ENCODE measurements at regions of chr18 and their contacts with region 1.

Region 1: DNA sequence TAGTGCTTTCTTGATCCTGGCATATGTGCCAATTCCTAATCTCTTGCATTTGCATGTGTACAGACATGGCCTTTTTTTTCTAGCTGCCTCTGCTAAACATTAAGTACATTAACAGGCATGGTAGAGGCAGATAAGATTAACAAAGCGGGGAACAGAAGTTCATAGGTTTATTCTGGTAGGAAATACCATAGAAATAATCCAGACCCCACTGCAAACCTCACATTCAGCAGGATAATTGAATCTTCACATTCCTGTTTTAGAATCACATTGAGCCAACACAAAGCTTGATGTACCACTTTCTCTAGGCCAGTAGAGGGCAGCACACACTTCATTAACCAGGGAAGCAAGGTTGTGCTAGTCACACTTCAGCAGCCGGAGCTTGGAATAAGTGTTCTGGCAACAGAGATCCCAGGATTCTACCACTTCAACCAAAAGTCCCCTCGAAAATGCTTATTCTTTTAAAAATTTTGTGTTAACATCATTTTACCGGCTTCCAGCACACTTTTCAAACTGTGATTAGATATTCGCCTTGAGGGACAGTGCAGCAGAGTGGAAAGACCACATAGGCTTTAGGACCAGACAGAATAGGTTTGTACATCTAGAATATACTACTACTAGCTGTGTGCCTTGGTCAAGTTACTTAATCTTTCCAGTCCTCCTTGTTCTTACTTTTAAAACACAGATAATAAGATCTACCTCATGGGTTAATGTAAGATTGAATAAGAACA is 420.2 kb upstream of the CHST9 start:
- DNase-seq: no peak
- ATAC-seq: peak; percentile 90
- H3K4me3 ChIP-seq: no peak overlapping the region
- H3K27ac ChIP-seq: no peak overlapping the region
- H3K4me1 ChIP-seq: no peaks in the 10 kb centered on the region
- H3K27me3 ChIP-seq: no peaks in the 10 kb centered on the region
- CTCF ChIP-seq: peak; percentile 77 to 86 (median 83)
- EP300 ChIP-seq: no peak
- POLR2A ChIP-seq: no peak
- RAD21 ChIP-seq: peak; percentile 76

Region 2: DNA sequence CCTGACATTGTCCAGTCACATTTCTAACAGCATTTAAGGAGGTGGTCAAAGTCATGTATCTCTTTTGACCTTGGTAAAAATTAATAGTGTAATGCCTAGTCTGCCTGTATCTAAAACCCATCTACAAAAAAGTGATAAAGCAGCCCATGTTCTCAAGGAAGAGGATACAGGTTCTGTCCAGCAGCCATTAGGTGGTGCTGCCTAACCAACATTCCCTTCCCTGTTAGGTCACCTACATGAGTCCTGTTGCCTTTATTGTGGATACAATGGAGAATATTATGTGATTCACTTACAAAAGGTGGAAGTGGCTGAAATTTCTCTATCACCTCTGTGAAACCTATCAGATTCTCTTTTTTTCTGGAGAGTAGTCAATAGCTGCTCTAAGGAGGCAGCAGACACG is 792.2 kb before region 1 on chr18:
- CTCF ChIA-PET with region 1: no interaction called
- POLR2A ChIA-PET with region 1: no interaction called
- RAD21 ChIA-PET with region 1: no interaction called
- SMC1A ChIA-PET with region 1: no interaction called
- in situ Hi-C with region 1: loop called (anchors 10 kb)
- intact Hi-C with region 1: loop called (anchors 5 kb)
- DNase-seq: peak; percentile 16
- ATAC-seq: peak; percentile 82
- H3K4me3 ChIP-seq: no peak overlapping the region
- H3K27ac ChIP-seq: no peak overlapping the region
- H3K4me1 ChIP-seq: no peaks in the 10 kb centered on the region
- H3K27me3 ChIP-seq: no peaks in the 10 kb centered on the region
- CTCF ChIP-seq: peak; percentile 58 to 69 (median 60)
- EP300 ChIP-seq: no peak
- POLR2A ChIP-seq: no peak
- RAD21 ChIP-seq: peak; percentile 81

Region 3: GRCh38 chr18:27527856-27528255 is 77.4 kb before region 1 on chr18:
- CTCF ChIA-PET with region 1: no interaction called
- POLR2A ChIA-PET with region 1: no interaction called
- RAD21 ChIA-PET with region 1: no interaction called
- SMC1A ChIA-PET with region 1: no interaction called
- in situ Hi-C with region 1: no loop called
- intact Hi-C with region 1: no loop called
- DNase-seq: no peak
- ATAC-seq: no peak
- H3K4me3 ChIP-seq: no peak overlapping the region
- H3K27ac ChIP-seq: no peak overlapping the region
- H3K4me1 ChIP-seq: no peaks in the 10 kb centered on the region
- H3K27me3 ChIP-seq: no peaks in the 10 kb centered on the region
- CTCF ChIP-seq: no peak
- EP300 ChIP-seq: no peak
- POLR2A ChIP-seq: no peak
- RAD21 ChIP-seq: no peak

Region 4: GRCh38 chr18:27585601-27586173 is 19.6 kb before region 1 on chr18:
- CTCF ChIA-PET with region 1: interaction called, 19 read pairs
- POLR2A ChIA-PET with region 1: no interaction called
- RAD21 ChIA-PET with region 1: no interaction called
- SMC1A ChIA-PET with region 1: interaction called, 3 read pairs
- in situ Hi-C with region 1: no loop called
- intact Hi-C with region 1: no loop called
- DNase-seq: no peak
- ATAC-seq: no peak
- H3K4me3 ChIP-seq: no peak overlapping the region
- H3K27ac ChIP-seq: no peak overlapping the region
- H3K4me1 ChIP-seq: no peaks in the 10 kb centered on the region
- H3K27me3 ChIP-seq: no peaks in the 10 kb centered on the region
- CTCF ChIP-seq: no peak
- EP300 ChIP-seq: no peak
- POLR2A ChIP-seq: no peak
- RAD21 ChIP-seq: no peak

Region 5: DNA sequence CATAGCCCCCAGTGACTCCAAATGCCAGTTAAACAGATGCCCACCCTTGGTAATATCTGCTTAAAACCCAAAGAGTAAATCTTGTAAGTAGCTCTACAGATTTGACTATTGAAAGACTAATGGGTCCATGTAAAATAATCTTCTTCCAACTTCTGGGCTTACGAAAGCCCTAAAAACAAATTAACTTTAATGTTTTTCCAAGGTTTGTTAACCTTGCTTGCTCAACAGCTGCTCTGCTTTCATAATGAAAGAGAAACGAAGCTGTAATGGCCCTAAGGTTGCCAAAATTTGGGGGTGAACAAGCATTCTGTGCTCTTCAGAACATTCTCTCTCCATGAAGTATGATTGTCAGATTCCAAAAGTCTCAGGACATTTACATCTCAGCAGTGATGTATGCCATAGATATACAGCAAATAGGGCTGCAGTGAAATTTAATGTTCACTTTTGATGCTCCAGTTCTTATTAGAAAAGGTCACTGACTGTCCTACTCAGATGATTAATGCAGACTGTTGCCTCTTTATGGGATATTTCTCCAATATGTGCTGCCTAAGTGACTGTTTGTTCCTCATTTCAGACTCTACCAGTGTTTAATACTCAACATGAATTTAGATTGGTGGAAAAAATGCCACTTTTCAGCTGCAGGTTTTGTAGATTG is 16.1 kb after region 1 on chr18:
- CTCF ChIA-PET with region 1: interaction called, 11 read pairs
- POLR2A ChIA-PET with region 1: no interaction called
- RAD21 ChIA-PET with region 1: no interaction called
- SMC1A ChIA-PET with region 1: interaction called, 4 read pairs
- in situ Hi-C with region 1: no loop called
- intact Hi-C with region 1: no loop called
- DNase-seq: no peak
- ATAC-seq: no peak
- H3K4me3 ChIP-seq: no peak overlapping the region
- H3K27ac ChIP-seq: no peak overlapping the region
- H3K4me1 ChIP-seq: no peaks in the 10 kb centered on the region
- H3K27me3 ChIP-seq: no peaks in the 10 kb centered on the region
- CTCF ChIP-seq: no peak
- EP300 ChIP-seq: no peak
- POLR2A ChIP-seq: no peak
- RAD21 ChIP-seq: no peak

Region 6: DNA sequence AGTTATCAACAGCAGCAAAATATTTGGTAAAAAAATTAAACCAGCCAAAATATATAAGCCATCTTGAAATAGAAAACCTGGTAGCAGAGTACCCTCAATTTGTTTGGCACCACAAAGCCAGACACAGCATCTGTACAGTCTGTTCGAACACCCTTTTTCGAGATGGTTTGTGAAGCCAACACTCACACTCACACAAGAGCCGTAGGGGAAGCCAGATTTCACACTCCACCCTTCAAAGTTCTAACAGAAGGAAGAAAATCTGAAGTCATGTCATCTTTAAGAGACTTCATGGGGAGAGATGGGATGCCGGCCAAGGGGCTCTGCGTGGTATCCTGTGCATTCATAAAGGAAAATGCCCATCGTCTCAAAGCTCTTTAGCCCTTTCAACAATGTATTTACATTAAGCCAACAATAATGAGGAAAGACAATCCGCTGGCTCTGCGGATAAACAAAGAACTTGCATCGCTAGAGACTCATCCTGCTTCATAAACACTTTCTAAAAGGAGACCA is 31.4 kb after region 1 on chr18:
- CTCF ChIA-PET with region 1: no interaction called
- POLR2A ChIA-PET with region 1: no interaction called
- RAD21 ChIA-PET with region 1: no interaction called
- SMC1A ChIA-PET with region 1: no interaction called
- in situ Hi-C with region 1: no loop called
- intact Hi-C with region 1: no loop called
- DNase-seq: no peak
- ATAC-seq: no peak
- H3K4me3 ChIP-seq: no peak overlapping the region
- H3K27ac ChIP-seq: no peak overlapping the region
- H3K4me1 ChIP-seq: no peaks in the 10 kb centered on the region
- H3K27me3 ChIP-seq: no peaks in the 10 kb centered on the region
- CTCF ChIP-seq: no peak
- EP300 ChIP-seq: no peak
- POLR2A ChIP-seq: no peak
- RAD21 ChIP-seq: no peak

Region 7: DNA sequence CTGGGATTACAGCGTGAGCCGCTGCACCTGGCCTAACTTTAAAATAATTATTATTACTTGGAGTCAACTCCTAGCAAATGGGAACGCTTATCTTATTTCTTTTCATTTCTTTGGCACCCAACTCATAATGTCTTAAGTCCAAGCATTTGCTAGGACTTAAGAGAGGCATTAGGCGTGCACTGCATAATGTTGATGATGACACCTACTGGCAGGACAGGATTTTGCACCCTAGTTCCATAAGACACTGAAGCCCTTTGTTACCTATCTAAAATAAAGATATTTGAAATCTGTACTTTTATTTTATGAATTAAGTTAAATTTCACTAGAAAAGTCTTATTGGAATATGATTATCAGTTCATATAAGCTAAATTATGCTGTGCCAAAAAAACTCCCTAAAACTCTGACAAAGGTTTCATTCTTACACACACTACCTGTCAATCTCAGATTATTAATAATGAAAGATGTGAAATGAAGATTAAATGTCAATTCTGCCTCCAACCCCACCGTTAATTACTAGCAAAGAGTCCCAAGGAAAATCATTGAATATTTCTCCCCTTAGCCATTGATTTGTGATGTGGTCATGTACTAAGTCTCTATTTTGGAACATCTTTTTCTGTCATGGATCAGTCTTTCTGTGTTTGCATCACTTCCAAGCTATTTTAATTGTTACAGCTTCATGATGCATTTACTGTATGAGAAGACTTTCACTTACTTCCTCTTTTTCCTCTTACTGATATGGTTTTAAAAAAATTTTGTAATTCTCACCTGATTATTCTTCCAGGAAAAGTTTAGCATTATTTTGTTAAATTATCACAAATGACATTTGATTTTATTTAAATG is 584.3 kb after region 1 on chr18:
- CTCF ChIA-PET with region 1: interaction called, 3 read pairs
- POLR2A ChIA-PET with region 1: no interaction called
- RAD21 ChIA-PET with region 1: interaction called, 6 read pairs
- SMC1A ChIA-PET with region 1: no interaction called
- in situ Hi-C with region 1: loop called (anchors 10 kb)
- intact Hi-C with region 1: loop called (anchors 1 kb)
- DNase-seq: peak; percentile 5
- ATAC-seq: peak; percentile 94
- H3K4me3 ChIP-seq: no peak overlapping the region
- H3K27ac ChIP-seq: no peak overlapping the region
- H3K4me1 ChIP-seq: no peaks in the 10 kb centered on the region
- H3K27me3 ChIP-seq: no peaks in the 10 kb centered on the region
- CTCF ChIP-seq: peak; percentile 61 to 69 (median 67)
- EP300 ChIP-seq: no peak
- POLR2A ChIP-seq: no peak
- RAD21 ChIP-seq: peak; percentile 58

Measured in GM12878 (cell line).